Activated CD4-positive, alpha-beta T cell treated with anti-CD3 and anti-CD28 coated beads for 36 hours (primary cell): ENCODE measurements at regions of chr4 and their contacts with region 1.

Region 1: DNA sequence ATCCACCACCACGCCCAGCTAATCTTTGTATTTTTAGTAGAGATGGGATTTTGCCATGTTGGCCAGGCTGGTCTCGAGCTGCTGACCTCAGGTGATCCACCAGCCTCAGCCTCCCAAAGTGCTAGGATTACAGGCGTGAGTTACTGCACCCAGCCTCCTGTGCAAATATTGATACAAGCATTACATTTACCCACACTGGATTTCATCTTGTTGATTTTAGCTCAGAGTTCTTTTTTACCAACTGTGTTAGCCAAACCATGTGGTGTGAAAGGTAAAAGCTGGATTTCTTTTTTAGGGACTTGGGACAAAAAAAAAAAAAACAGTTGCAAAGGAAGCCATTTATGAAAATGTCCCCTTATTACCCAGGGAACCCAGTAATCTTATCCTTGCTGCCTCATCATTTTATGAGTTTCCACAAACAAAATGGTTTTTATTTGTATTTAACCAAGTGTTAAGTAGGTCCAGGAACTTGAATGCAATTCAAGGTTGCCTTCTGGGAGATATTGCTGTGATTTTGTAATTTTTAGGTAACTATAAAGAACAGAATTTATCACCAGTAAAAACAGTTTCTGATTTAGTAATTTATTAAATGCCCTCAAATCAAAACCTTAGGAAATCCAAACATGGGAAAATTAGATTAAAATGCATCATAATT is 202.5 kb downstream of the PALLD start:
- DNase-seq: no peak
- ATAC-seq: no peak
- H3K4me3 Mint-ChIP-seq: no peak overlapping the region
- H3K27ac Mint-ChIP-seq: no peak overlapping the region
- H3K4me1 Mint-ChIP-seq: no peaks in the 10 kb centered on the region
- H3K27me3 Mint-ChIP-seq: no peaks in the 10 kb centered on the region

Region 2: DNA sequence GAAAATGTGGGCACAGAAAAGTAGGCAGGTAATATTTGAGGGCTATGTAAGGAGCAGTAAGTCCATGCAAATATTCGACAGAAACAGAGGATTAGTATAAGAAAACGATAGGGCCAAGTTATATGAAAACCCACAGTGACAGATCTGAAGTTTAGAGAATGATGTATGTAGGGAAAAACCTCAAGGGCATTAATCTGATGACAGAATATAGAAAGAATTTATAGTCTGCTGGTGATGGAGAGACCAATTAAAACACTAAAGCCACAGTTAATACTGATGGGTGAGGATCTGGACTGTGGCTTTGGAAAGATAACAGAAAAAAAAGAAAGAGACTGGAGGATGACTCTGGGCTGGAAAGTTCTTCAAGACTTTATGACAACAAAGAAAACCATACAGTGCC is 32.8 kb before region 1 on chr4:
- CTCF ChIA-PET with region 1: no interaction called
- POLR2A ChIA-PET with region 1: no interaction called
- intact Hi-C with region 1: no loop called
- DNase-seq: no peak
- ATAC-seq: no peak
- H3K4me3 Mint-ChIP-seq: no peak overlapping the region
- H3K27ac Mint-ChIP-seq: no peak overlapping the region
- H3K4me1 Mint-ChIP-seq: no peaks in the 10 kb centered on the region
- H3K27me3 Mint-ChIP-seq: no peaks in the 10 kb centered on the region

Region 3: GRCh38 chr4:168751263-168752225 is 52.2 kb after region 1 on chr4:
- CTCF ChIA-PET with region 1: no interaction called
- POLR2A ChIA-PET with region 1: no interaction called
- intact Hi-C with region 1: no loop called
- DNase-seq: no peak
- ATAC-seq: no peak
- H3K4me3 Mint-ChIP-seq: no peak overlapping the region
- H3K27ac Mint-ChIP-seq: no peak overlapping the region
- H3K4me1 Mint-ChIP-seq: no peaks in the 10 kb centered on the region
- H3K27me3 Mint-ChIP-seq: peaks cover 2% of the 10 kb centered on the region

Region 4: GRCh38 chr4:168766604-168767316 is 67.4 kb after region 1 on chr4:
- CTCF ChIA-PET with region 1: no interaction called
- POLR2A ChIA-PET with region 1: interaction called, 12 read pairs
- intact Hi-C with region 1: no loop called
- DNase-seq: no peak
- ATAC-seq: no peak
- H3K4me3 Mint-ChIP-seq: no peak overlapping the region
- H3K27ac Mint-ChIP-seq: no peak overlapping the region
- H3K4me1 Mint-ChIP-seq: no peaks in the 10 kb centered on the region
- H3K27me3 Mint-ChIP-seq: peaks cover 5% of the 10 kb centered on the region